Motor neuron (in vitro differentiated cells): ENCODE measurements at regions of chr1 and their contacts with region 1.

Region 1: DNA sequence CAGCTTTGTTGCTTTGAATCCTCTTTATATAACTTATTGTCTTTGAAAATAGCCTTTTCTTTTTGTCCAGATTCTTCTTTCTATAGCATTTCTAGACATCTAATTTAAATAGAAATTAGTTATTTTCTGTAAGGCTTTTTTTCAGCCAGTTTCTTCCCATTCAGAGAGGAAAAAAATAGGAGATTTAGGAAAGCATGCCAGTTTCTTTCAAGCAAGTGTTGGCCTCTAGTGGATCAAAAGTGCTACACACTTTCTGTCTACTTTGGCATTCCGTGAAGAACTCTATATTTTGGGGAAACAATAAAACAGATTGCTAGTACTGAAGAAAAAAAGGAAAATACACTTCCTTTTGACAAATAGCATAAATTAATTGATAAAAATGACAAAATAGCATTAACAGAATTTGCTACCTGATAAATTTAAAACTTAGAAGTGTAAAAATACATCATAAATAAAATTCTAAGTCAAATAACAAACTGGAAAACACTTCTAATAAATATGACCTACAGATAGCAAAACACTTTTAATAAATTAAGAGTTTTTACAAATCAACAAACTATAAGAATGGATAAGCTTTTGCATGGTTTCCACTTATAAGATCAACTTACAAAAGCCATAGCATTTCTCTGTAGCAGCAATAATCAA is 13.1 kb upstream of the EXO1 start:
- ATAC-seq: peak in 4 of 8 experiments; percentile 28 to 51 (median 38)
- H3K4me3 ChIP-seq: no peak overlapping the region
- H3K27ac ChIP-seq: no peak overlapping the region
- H3K4me1 ChIP-seq: no peaks in the 10 kb centered on the region

Region 2: DNA sequence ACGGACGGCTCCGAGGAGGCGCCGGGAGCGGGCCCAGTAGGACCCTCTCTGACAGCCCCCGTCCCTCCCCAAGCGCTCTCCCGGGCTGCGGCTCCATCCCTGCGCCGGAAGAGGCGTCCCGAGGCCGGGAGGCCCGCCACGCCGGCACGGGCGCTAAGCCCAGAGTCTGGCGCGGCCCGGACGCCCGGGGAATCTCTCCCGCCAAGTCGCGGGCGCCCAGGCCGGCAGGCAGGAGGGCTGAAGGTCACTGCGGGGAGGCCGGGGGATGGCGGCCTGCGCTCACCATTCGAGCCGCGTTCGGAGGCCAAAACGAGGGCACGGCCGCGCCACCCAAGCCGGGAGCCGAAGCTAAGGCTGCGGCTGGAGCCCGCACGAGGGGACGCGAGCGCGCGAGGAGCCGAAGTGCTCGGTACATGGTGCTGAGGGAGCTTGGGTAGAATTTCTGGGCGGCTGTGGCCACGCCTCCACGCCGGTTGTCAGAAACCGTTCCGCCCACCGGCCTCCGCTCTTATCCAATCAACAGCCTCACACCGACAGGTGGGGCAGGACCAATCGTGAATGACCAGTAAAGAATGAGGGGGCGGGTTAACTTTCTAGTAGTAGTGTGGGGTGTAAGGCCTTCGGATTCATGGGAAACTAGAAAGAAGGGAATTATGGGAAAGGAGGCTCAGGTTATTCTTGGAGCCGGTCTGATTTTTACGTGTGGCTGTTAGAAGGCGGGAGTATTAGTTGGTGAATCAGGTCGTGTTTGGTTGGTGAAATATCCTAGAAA is 315.4 kb before region 1 on chr1 and contains the start of gene FH:
- in situ Hi-C with region 1: loop called in 2 of 9 experiments (anchors 10 kb)
- ATAC-seq: peak; percentile 91 to 97 (median 96)
- H3K4me3 ChIP-seq: peak within 1 kb of the TSS; percentile 73 to 97 (median 76)
- H3K27ac ChIP-seq: peak within 1 kb of the TSS; percentile 64 to 72
- H3K4me1 ChIP-seq: peaks cover 4 to 24% of the 10 kb centered on the region in 2 donors
- total RNA-seq, gene FH: 51.5 to 129 (median 95.5) TPM

Region 3: DNA sequence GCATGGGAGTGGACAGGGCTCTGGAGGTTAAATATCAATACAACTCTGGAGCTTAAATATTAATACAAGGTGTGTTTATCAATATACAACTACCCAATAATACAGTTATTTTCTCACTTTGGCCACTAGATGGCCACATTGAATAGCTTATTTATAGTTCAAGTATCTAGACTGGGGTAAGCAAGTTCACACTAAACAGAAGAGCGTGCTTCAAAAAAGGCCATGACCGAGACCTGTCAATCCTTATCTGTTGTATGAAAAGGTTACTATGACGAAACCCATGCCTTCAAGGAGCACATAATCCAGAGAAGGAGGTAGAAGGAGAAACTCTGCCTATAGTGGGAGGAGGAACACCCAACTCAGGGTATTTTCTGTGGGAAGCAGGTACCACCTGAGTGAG is 223.8 kb before region 1 on chr1:
- in situ Hi-C with region 1: loop called in 1 of 9 experiments (anchors 10 kb)
- ATAC-seq: peak in 3 of 8 experiments; percentile 78 to 91 (median 83)
- H3K4me3 ChIP-seq: no peak overlapping the region
- H3K27ac ChIP-seq: no peak overlapping the region
- H3K4me1 ChIP-seq: no peaks in the 10 kb centered on the region

Region 4: DNA sequence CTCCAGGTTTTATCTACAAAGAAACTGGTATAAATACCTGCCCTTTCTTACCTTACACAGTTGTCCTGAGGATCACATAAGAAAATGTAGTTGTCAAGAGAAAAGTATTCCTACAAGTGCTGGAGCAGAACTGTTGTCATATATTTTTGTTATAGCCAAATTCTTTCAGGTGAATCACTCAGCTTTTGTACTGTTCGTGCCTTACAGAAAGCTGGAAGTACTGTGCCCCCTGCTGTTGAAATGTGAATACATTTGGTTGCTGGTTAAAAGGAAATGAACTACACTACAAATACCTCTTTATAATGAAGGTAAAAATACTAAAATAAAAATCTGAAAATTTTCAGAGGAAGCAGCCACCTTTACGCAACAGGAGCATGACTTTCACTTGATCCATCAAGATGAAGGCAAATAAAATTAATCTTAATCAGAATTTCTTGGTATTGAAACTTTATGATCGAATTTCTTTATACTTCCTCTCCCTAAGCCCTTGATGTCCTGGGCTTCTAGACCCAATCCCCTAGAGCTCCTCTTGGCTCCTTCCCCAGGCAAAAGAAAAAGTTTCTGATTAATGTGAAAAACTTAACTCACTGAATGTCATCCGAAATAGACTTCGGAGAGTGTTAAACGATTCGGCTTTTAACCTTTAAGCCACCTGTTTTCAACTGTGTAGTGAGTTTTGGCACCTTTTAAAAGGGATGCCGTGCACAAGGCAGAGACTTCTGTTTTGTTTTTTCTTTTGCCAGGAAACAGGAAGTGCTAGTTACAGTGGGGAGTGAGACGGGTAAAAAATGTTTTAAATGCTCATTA is 207.2 kb before region 1 on chr1:
- in situ Hi-C with region 1: loop called in 1 of 9 experiments (anchors 10 kb)
- ATAC-seq: peak in 3 of 8 experiments; percentile 47 to 76 (median 60)
- H3K4me3 ChIP-seq: no peak overlapping the region
- H3K27ac ChIP-seq: no peak overlapping the region
- H3K4me1 ChIP-seq: no peaks in the 10 kb centered on the region